CD4-positive, alpha-beta T cell (primary cell): ENCODE measurements at regions of chr17 and their contacts with region 1.

Region 1: DNA sequence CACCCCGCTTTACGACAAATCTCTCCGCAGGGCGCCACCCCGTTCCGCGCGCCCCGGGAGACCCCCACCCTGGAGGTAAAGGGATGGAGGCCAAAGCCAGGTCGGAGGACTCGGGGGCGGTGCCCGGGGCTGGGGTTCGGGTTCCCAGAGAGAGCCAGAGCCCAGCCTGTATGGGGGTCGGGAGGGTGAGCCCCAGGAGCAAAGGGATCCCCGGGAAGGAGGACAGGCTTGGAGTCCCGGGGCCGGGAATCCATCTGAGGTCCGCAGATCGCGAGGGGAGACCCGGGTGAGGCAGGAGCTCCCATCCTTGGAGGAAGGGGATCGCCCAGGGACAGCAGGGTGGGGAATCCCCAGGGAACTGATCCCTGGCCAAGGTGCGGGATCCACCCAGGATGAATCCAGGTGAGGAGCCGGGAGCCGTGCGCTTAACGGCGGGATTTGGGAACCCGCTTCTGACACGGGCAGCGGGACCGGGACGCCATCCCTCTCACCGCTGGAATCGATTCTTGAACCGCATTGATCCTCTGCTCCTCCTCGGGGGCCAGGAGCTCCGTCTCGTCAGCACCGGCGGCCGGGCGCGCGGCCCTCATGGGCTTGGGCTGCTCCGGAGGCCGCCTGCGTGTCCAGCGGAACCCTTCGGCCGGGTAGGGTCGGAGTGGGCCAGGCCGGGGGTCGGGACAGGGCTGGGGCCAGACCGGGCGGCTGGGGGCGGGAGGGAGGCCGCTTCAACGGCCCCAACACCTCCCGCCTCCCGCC is at the start of gene MMD:
- DNase-seq: peak in 3 of 14 experiments; percentile 1 to 37 (median 13)
- ATAC-seq: no peak
- H3K4me3 ChIP-seq: peak within 1 kb of the TSS; percentile 99
- H3K4me3 Mint-ChIP-seq: peak within 1 kb of the TSS; percentile 95
- H3K27ac ChIP-seq: peak within 1 kb of the TSS; percentile 65
- H3K27ac Mint-ChIP-seq: peak within 1 kb of the TSS; percentile 91
- H3K4me1 ChIP-seq: peaks cover 21% of the 10 kb centered on the region
- H3K4me1 Mint-ChIP-seq: peaks cover 30% of the 10 kb centered on the region
- H3K27me3 ChIP-seq: peaks cover 6 to 7% of the 10 kb centered on the region in 2 experiments
- H3K27me3 Mint-ChIP-seq: peaks cover 32% of the 10 kb centered on the region
- CTCF ChIP-seq: no peak
- total RNA-seq, gene MMD: 15.3 to 17.4 TPM

Region 2: DNA sequence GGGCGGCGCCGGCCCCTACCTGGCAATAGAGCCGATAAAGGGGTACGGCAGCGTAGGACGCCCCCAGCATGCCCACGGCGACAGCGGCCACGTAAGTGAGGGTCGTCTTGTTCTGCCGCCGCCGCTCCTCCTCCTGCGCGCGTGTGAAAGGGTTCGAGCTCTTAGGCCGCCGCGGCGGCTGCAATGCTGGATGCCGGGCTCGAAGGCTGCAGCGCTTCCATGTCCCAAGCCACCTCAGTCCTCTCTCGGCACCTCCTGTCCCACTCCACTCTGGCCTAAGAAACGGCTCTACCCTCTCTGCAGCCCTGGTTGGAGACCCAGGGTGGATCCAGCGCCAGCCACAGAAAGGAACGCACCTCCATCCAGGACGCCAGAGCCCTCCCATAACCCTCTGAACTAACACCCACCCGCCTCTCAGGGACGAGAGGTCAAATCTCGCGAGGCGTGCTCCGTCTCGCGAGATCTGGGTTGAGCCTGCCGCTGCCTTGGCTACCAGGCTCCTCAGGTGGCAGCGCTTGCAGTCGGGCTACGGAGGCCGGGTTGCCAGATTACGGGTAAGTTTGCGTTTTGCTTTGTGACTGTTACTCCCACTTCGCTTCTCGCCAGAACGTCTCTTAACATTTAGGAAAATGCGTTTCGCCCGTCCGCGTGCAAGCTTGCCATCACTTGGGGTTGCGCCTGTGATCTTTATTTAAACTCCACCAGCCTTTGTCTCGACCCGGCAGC is 452.9 kb before region 1 on chr17 and contains the starts of genes COX11 and STXBP4:
- CTCF ChIA-PET with region 1: no interaction called
- POLR2A ChIA-PET with region 1: no interaction called
- intact Hi-C with region 1: loop called in 1 of 2 experiments (anchors 5 kb)
- DNase-seq: peak; percentile 89 to 98 (median 93)
- ATAC-seq: peak; percentile 96
- H3K4me3 ChIP-seq: peak within 1 kb of the TSS; percentile 92
- H3K4me3 Mint-ChIP-seq: no peak within 1 kb of the TSS
- H3K27ac ChIP-seq: peak within 1 kb of the TSS; percentile 61 to 85
- H3K27ac Mint-ChIP-seq: no peak within 1 kb of the TSS
- H3K4me1 ChIP-seq: peaks cover 25% of the 10 kb centered on the region
- H3K4me1 Mint-ChIP-seq: peaks cover 5% of the 10 kb centered on the region
- H3K27me3 ChIP-seq: no peaks in the 10 kb centered on the region
- H3K27me3 Mint-ChIP-seq: no peaks in the 10 kb centered on the region
- CTCF ChIP-seq: no peak
- total RNA-seq, gene COX11: 24.1 to 30.3 TPM
- total RNA-seq, gene STXBP4: 5.1 to 5.4 TPM

Region 3: DNA sequence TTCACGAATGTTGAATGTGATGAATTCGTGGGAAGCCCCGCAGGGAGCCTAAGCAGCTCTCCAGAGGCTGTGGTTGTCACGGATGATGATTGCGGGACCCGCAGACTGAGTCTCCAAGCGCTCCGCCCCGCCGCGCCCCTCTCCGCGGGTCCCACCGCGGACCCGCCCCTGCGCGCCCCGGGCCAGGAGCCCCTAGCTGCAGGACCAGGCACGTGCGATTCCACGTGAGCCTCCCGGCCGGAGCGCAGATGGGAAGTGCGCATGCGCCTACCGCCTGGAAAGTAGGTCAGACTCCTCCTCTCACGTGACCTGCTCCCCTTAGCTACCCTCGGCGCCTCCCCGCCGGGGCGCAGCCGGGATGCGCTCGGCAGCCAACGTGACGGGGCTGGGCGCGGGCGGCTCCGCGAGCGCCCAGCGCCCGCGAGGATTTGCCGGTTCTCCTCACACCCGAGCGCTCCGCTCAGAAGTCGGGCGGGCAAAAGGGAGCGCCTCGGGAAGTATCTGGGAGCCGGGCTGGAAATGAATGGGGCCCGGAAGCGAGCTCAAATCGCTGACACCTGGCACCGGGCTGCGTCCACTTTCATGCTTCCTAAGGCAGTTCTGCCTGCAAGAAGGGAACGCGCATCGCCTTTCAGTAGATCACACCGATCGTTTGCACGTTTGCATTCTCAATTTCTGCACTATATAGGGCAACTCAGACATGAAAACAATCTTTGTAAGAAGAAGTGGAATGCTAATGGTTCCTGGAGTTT is 183.0 kb before region 1 on chr17:
- CTCF ChIA-PET with region 1: no interaction called
- POLR2A ChIA-PET with region 1: interaction called, 3 read pairs
- intact Hi-C with region 1: loop called in 1 of 2 experiments (anchors 5 kb)
- DNase-seq: peak; percentile 75 to 96 (median 84)
- ATAC-seq: peak; percentile 89
- H3K4me3 ChIP-seq: peak overlapping the region; percentile 74
- H3K4me3 Mint-ChIP-seq: peak overlapping the region; percentile 89
- H3K27ac ChIP-seq: peak overlapping the region in 1 of 2 donors; percentile 65
- H3K27ac Mint-ChIP-seq: peak overlapping the region; percentile 87
- H3K4me1 ChIP-seq: peaks cover 19% of the 10 kb centered on the region
- H3K4me1 Mint-ChIP-seq: peaks cover 25% of the 10 kb centered on the region
- H3K27me3 ChIP-seq: peaks cover 0 to 3% of the 10 kb centered on the region in 2 experiments
- H3K27me3 Mint-ChIP-seq: peaks cover 23% of the 10 kb centered on the region
- CTCF ChIP-seq: no peak

Region 4: DNA sequence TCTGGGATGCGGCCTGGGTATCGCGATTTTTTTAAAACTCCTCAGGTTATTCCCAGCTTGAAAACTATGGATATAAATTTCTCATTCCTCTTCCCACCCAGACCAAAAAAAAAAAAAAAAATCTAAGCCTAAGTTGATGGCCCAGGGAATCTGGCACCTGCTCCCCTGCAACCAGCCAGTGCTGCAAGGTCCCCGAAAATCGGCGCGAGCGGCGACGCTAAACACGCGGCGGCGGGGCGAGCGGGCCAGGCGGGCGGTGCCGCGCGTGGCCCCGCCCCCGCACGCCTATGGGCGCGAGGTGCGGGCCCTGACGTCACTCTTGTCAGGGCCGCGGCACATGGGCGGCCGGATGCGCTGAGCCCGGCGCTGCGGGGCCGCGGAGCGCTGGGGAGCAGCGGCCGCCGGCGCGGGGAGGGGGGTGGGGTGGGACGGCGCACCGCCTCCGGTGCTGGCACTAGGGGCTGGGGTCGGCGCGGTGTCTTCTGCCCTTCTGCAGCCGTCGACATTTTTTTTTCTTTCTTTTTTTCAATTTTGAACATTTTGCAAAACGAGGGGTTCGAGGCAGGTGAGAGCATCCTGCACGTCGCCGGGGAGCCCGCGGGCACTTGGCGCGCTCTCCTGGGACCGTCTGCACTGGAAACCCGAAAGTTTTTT is 156.6 kb before region 1 on chr17 and contains the start of gene HLF:
- CTCF ChIA-PET with region 1: no interaction called
- POLR2A ChIA-PET with region 1: no interaction called
- intact Hi-C with region 1: loop called in 1 of 2 experiments (anchors 2 kb)
- DNase-seq: peak; percentile 53 to 93 (median 69)
- ATAC-seq: peak; percentile 90
- H3K4me3 ChIP-seq: peak within 1 kb of the TSS; percentile 60
- H3K4me3 Mint-ChIP-seq: peak within 1 kb of the TSS; percentile 86
- H3K27ac ChIP-seq: no peak within 1 kb of the TSS
- H3K27ac Mint-ChIP-seq: no peak within 1 kb of the TSS
- H3K4me1 ChIP-seq: peaks cover 33% of the 10 kb centered on the region
- H3K4me1 Mint-ChIP-seq: peaks cover 24% of the 10 kb centered on the region
- H3K27me3 ChIP-seq: peaks cover 41 to 49% of the 10 kb centered on the region in 2 experiments
- H3K27me3 Mint-ChIP-seq: peaks cover 65% of the 10 kb centered on the region
- CTCF ChIP-seq: no peak
- total RNA-seq, gene HLF: 4.3 to 4.9 TPM

Region 5: GRCh38 chr17:55750750-55751657 is 329.6 kb after region 1 on chr17 and contains the start of gene PCTP:
- CTCF ChIA-PET with region 1: no interaction called
- POLR2A ChIA-PET with region 1: no interaction called
- intact Hi-C with region 1: loop called in 1 of 2 experiments (anchors 10 kb)
- DNase-seq: peak; percentile 54 to 88 (median 74)
- ATAC-seq: peak; percentile 97
- H3K4me3 ChIP-seq: peak within 1 kb of the TSS; percentile 93
- H3K4me3 Mint-ChIP-seq: peak within 1 kb of the TSS; percentile 88
- H3K27ac ChIP-seq: peak within 1 kb of the TSS in 1 of 2 donors; percentile 35
- H3K27ac Mint-ChIP-seq: peak within 1 kb of the TSS; percentile 32
- H3K4me1 ChIP-seq: peaks cover 11% of the 10 kb centered on the region
- H3K4me1 Mint-ChIP-seq: peaks cover 23% of the 10 kb centered on the region
- H3K27me3 ChIP-seq: peaks cover 3 to 20% of the 10 kb centered on the region in 2 experiments
- H3K27me3 Mint-ChIP-seq: peaks cover 26% of the 10 kb centered on the region
- CTCF ChIP-seq: peak; percentile 49
- total RNA-seq, gene PCTP: 1.1 to 1.2 TPM

Region 6: GRCh38 chr17:56833809-56834379 is 1412.5 kb after region 1 on chr17 and contains the starts of genes C17orf67 and DGKE:
- CTCF ChIA-PET with region 1: no interaction called
- POLR2A ChIA-PET with region 1: no interaction called
- intact Hi-C with region 1: loop called in 1 of 2 experiments (anchors 5 kb)
- DNase-seq: peak; percentile 97 to 100 (median 99)
- ATAC-seq: peak; percentile 87
- H3K4me3 ChIP-seq: peak within 1 kb of the TSS; percentile 96
- H3K4me3 Mint-ChIP-seq: peak within 1 kb of the TSS; percentile 99
- H3K27ac ChIP-seq: peak within 1 kb of the TSS; percentile 58 to 83
- H3K27ac Mint-ChIP-seq: peak within 1 kb of the TSS; percentile 95
- H3K4me1 ChIP-seq: peaks cover 41% of the 10 kb centered on the region
- H3K4me1 Mint-ChIP-seq: peaks cover 67% of the 10 kb centered on the region
- H3K27me3 ChIP-seq: no peaks in the 10 kb centered on the region
- H3K27me3 Mint-ChIP-seq: no peaks in the 10 kb centered on the region
- CTCF ChIP-seq: no peak
- total RNA-seq, gene C17orf67: 4.3 to 4.8 TPM
- total RNA-seq, gene DGKE: 20.0 to 22.3 TPM

Region 7: DNA sequence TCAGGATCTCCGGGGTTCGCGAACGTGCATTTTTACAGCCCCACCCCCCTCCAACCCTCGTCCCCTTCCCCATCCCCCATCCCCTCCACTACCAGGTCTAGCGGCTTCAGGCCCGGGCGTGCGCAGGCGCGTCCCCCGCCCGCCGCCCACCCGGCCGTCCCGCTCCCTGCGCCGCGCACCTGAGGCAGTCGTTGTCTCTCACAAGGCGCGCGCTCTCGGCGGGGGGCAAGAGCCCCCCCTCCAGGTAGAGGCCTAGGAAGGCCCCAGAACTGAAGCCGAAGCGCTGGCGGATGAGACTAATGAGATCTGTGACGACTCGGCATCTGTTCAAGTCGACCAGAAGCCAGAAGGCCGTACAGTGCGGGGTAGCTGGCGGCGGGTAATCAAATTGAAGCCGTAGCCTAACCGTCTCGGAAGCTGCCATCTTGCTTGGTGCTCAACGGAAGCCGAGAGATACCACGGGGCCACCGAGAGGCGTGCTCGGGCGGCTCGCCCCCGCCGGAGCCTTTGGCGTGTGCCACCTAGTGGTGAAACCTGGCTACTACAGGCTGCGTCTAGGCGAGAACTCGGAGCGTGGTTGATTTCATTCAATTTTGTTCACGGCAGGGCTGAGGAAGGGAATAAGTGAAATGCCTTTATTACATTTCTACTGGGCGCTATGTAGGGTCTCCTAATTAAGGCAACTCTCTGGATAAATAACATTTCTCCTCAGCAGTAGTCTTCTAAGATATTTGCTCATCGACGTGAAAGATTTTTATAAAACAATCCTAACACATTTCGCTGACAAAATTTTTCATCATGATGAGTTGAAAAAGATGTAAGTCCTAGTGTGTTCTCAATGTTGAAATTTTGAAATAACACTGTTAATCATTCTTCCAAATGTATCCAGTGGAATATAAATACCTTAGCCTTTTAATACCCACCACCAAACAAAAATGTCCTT is 1539.5 kb after region 1 on chr17 and contains the start of gene COIL:
- CTCF ChIA-PET with region 1: no interaction called
- POLR2A ChIA-PET with region 1: no interaction called
- intact Hi-C with region 1: loop called in 1 of 2 experiments (anchors 10 kb)
- DNase-seq: peak; percentile 89 to 96 (median 92)
- ATAC-seq: peak; percentile 97
- H3K4me3 ChIP-seq: peak within 1 kb of the TSS; percentile 68
- H3K4me3 Mint-ChIP-seq: peak within 1 kb of the TSS; percentile 93
- H3K27ac ChIP-seq: peak within 1 kb of the TSS; percentile 82 to 83
- H3K27ac Mint-ChIP-seq: peak within 1 kb of the TSS; percentile 78
- H3K4me1 ChIP-seq: peaks cover 26% of the 10 kb centered on the region
- H3K4me1 Mint-ChIP-seq: peaks cover 27% of the 10 kb centered on the region
- H3K27me3 ChIP-seq: peaks cover 0 to 2% of the 10 kb centered on the region in 2 experiments
- H3K27me3 Mint-ChIP-seq: no peaks in the 10 kb centered on the region
- CTCF ChIP-seq: peak; percentile 96
- total RNA-seq, gene COIL: 19.4 to 20.3 TPM